Activated CD8-positive, alpha-beta T cell treated with anti-CD3 and anti-CD28 coated beads, Interleukin-2, amount 10 ng/mL, durations not matched to agents 7 days and 5 days (primary cell): ENCODE measurements at regions of chr11 and their contacts with region 1.

Region 1: DNA sequence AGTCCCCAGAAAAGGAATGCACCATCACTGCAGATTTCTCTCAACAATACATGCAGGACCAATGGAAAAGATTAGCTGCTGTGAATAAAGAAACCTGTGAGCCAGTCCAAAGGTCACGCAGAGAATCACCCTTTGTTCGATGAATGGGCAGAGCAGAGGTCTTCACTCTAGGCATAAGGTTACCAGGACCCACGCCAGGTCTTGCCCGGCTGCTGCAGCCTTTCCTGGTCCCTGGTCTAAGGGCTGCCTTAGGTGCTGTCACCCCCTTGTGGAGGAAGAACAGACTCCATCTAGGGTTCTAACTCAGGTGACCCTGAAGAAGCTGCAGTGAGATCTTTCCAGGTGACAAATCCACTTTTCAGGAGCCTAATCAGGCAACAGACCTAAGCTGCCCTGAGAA is 29.0 kb upstream of the NAP1L4 start:
- DNase-seq: peak; percentile 64
- ATAC-seq: peak; percentile 68
- H3K4me3 Mint-ChIP-seq: no peak overlapping the region
- H3K27ac Mint-ChIP-seq: peak overlapping the region; percentile 53
- H3K4me1 Mint-ChIP-seq: peaks cover 75% of the 10 kb centered on the region
- H3K27me3 Mint-ChIP-seq: no peaks in the 10 kb centered on the region

Region 2: DNA sequence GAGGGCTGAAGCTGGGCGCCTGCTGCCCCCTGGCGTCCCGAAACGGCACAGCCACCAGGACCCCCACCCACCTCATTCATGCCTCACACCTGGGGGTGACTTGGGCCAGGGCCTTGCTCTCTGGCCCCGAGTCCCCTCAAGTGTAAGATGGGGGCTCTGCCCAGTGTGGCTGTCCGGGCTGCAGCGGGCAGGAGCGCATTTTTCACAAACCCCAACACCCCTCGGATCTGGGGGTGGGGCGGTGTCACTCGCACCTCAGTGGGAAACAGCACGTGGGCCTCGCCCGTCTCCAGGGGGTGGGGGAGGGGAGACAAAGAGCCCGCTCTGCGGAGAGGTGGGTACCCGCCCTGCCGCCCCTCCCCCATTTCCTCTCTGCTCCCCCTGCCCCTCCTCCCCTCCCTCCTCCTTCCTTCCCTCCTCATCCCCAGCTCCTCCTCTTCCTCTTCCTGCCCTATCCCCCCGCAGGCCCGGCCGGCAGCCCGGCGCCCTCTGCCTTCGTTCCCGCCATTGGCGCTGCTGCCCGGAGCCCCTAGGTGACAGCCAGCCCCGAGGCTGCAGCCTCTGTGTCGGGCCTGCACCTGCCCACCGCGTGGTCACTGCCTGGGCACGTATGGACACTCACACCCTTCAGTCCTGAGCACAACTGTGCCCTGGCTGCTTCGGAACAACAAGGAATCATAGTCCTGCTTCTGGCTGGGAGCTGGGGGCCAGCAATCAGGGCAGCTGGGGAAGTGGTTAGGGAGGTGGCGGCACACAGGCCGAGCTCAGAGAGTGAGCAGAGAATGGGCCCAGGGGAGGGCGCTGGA is 128.7 kb before region 1 on chr11:
- CTCF ChIA-PET with region 1: interaction called, 14 read pairs
- POLR2A ChIA-PET with region 1: interaction called, 4 read pairs
- DNase-seq: peak; percentile 86
- ATAC-seq: peak; percentile 70
- H3K4me3 Mint-ChIP-seq: peak overlapping the region; percentile 80
- H3K27ac Mint-ChIP-seq: peak overlapping the region; percentile 92
- H3K4me1 Mint-ChIP-seq: peaks cover 34% of the 10 kb centered on the region
- H3K27me3 Mint-ChIP-seq: peaks cover under 1% of the 10 kb centered on the region

Region 3: GRCh38 chr11:2955906-2956476 is 65.1 kb before region 1 on chr11:
- CTCF ChIA-PET with region 1: interaction called, 17 read pairs
- POLR2A ChIA-PET with region 1: no interaction called
- DNase-seq: no peak
- ATAC-seq: no peak
- H3K4me3 Mint-ChIP-seq: no peak overlapping the region
- H3K27ac Mint-ChIP-seq: peak overlapping the region; percentile 60
- H3K4me1 Mint-ChIP-seq: peaks cover 49% of the 10 kb centered on the region
- H3K27me3 Mint-ChIP-seq: no peaks in the 10 kb centered on the region

Region 4: DNA sequence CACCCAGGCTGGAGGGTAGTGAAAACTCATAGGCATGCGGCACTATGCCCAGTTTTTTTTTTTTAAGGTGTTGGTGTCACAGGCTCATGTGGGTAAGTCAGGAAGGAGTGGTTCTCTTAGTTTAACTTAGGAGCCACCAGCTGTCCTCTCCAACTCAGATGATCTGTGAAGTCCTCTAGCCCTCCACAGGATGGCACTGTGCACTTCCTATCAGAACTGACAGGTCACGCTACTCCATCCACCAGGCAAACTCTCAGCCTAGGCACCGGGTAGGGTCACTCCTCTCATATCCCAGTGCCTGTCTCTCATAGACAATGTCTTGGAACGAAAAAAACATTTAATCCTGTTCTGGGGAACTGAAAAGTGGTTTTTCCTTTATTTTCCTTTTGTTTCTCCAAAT is 45.5 kb before region 1 on chr11:
- CTCF ChIA-PET with region 1: interaction called, 77 read pairs
- POLR2A ChIA-PET with region 1: interaction called, 14 read pairs
- DNase-seq: peak; percentile 70
- ATAC-seq: peak; percentile 90
- H3K4me3 Mint-ChIP-seq: no peak overlapping the region
- H3K27ac Mint-ChIP-seq: peak overlapping the region; percentile 43
- H3K4me1 Mint-ChIP-seq: peaks cover 36% of the 10 kb centered on the region
- H3K27me3 Mint-ChIP-seq: no peaks in the 10 kb centered on the region

Region 5: GRCh38 chr11:2992234-2992996 is 28.7 kb before region 1 on chr11 and contains the start of gene NAP1L4:
- CTCF ChIA-PET with region 1: interaction called, 78 read pairs
- POLR2A ChIA-PET with region 1: interaction called, 168 read pairs
- DNase-seq: peak; percentile 98
- ATAC-seq: peak; percentile 88
- H3K4me3 Mint-ChIP-seq: peak within 1 kb of the TSS; percentile 100
- H3K27ac Mint-ChIP-seq: peak within 1 kb of the TSS; percentile 99
- H3K4me1 Mint-ChIP-seq: peaks cover 23% of the 10 kb centered on the region
- H3K27me3 Mint-ChIP-seq: no peaks in the 10 kb centered on the region
- total RNA-seq, gene NAP1L4: 287 to 300 TPM

Region 6: GRCh38 chr11:3049430-3050243 is 28.5 kb after region 1 on chr11:
- CTCF ChIA-PET with region 1: interaction called, 12 read pairs
- POLR2A ChIA-PET with region 1: no interaction called
- DNase-seq: peak; percentile 62
- ATAC-seq: peak; percentile 69
- H3K4me3 Mint-ChIP-seq: no peak overlapping the region
- H3K27ac Mint-ChIP-seq: peak overlapping the region; percentile 69
- H3K4me1 Mint-ChIP-seq: peaks cover 41% of the 10 kb centered on the region
- H3K27me3 Mint-ChIP-seq: no peaks in the 10 kb centered on the region

Region 7: DNA sequence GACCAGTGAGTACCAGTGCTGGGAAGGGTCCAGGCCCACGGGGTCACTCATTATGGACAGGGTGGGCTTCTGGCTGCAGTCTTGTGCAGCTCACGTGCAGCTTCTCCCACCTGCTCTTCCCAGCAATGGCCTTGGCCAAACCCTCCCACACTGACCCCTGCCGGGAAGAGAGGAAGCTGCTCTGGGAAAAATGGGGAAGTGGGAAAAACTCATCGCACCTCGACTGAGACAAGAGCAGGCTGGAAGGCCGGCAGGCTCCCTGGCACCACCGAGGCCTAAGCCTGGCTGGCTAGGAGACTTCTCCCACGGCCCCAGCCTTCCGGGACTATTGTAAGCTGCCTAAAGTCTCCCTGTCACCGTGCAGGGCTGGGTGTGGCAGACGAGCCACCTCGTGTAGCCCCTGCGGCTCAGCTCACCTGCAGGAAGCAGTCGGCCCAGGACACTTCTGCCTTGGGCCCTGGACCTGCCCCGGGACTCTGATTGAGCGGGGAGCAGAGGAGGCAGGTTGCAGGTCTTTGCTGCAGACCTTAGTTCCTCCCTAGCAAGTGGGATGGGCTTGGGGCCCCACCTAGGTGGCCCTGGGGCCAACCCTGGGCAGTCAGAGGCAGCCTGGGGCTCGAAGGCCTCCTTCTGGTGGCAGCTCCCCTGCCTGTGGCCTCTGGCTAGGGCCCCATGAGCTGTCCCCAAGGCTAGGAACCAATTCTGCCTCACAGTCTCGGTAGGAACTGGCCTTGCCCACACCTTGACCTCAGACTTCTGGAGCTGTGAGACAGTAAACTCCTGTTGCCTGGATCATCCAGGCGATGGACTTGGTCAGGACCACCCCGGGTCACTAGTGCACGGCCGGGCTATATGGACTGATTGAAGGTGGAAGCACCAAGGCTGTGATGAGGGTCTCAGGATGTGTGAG is 174.4 kb after region 1 on chr11:
- CTCF ChIA-PET with region 1: no interaction called
- POLR2A ChIA-PET with region 1: no interaction called
- DNase-seq: no peak
- ATAC-seq: no peak
- H3K4me3 Mint-ChIP-seq: no peak overlapping the region
- H3K27ac Mint-ChIP-seq: no peak overlapping the region
- H3K4me1 Mint-ChIP-seq: no peaks in the 10 kb centered on the region
- H3K27me3 Mint-ChIP-seq: no peaks in the 10 kb centered on the region